Upper lobe of right lung (tissue), 1 donor: ENCODE measurements at regions of chr22 and their contacts with region 1.

Region 1: GRCh38 chr22:31080848-31081649 is at the start of gene SMTN:
- DNase-seq: peak; percentile 95
- ATAC-seq: peak; percentile 83
- H3K4me3 ChIP-seq: peak within 1 kb of the TSS; percentile 91
- H3K27ac ChIP-seq: peak within 1 kb of the TSS; percentile 84
- H3K4me1 ChIP-seq: peaks cover 36% of the 10 kb centered on the region
- H3K27me3 ChIP-seq: no peaks in the 10 kb centered on the region
- CTCF ChIP-seq: no peak
- total RNA-seq, gene SMTN: 71.6 TPM

Region 2: DNA sequence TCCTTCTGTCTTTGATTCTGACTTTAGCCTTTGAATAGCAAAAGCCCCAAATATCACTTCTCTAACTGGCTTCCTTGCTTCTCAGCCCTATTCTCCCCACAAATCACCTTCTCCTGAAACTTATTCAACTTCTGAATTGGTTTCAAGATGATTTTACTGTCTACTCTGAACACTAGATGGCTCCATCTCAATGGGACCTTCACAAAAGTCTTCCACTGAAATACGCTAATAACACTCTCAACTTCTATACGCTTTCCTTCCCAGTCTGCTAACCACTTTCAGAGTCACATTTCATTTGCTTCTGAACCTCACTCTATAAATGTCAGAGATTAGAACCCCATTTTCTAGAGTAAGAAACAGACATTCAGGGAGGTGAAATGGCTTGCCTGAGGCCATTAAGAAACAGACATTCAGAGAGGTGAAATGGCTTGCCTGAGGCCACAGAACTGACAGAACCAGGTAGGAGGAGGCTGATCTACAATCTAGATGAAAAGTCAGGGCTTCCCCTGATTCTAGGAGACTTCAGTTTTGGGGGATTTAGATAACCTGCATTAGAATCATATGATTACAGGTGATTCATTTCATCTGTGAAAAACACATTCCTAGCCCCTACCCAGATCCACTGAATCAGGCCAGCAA is 133.1 kb before region 1 on chr22:
- intact Hi-C with region 1: loop called (anchors 5 kb)
- DNase-seq: no peak
- ATAC-seq: peak; percentile 65
- H3K4me3 ChIP-seq: no peak overlapping the region
- H3K27ac ChIP-seq: no peak overlapping the region
- H3K4me1 ChIP-seq: peaks cover 10% of the 10 kb centered on the region
- H3K27me3 ChIP-seq: no peaks in the 10 kb centered on the region
- CTCF ChIP-seq: peak; percentile 62

Region 3: DNA sequence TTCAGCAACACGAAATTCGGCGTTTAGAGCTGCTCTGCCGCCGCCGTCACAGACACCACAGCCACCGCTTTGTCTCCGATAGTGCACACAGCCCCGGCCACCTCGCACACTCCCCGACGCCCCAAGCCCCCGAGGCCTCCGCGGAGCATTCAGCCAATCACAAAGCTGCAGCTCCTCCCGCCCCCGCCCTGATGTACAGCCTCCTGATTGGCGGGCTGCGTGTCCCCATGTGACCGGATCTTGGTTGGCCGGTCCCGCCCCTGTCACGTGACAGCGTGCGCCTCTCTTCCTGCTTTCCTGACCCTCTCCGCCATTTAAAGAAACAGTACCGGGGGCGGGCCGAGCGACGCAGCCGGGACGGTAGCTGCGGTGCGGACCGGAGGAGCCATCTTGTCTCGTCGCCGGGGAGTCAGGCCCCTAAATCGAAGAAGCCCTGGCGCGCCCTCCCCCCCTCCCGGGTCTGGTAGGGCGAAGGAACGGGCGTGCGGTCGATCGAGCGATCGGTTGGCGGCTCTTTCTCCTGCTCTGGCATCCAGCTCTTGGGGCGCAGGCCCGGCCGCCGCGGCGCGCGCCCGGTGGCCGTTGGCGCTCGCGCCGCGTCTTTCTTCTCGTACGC is 112.0 kb before region 1 on chr22 and contains the start of gene TUG1:
- intact Hi-C with region 1: loop called (anchors 5 kb)
- DNase-seq: peak; percentile 99
- ATAC-seq: peak; percentile 97
- H3K4me3 ChIP-seq: peak within 1 kb of the TSS; percentile 82
- H3K27ac ChIP-seq: peak within 1 kb of the TSS; percentile 95
- H3K4me1 ChIP-seq: peaks cover 27% of the 10 kb centered on the region
- H3K27me3 ChIP-seq: no peaks in the 10 kb centered on the region
- CTCF ChIP-seq: no peak
- total RNA-seq, gene TUG1: 71.8 TPM